WTC11 (cell line): ENCODE measurements at regions of chr20 and their contacts with region 1.

Region 1: GRCh38 chr20:21303061-21303871 is at the start of gene XRN2:
- DNase-seq: peak; percentile 95
- ATAC-seq: peak; percentile 90
- H3K4me3 Mint-ChIP-seq: peak within 1 kb of the TSS; percentile 96
- H3K27ac Mint-ChIP-seq: peak within 1 kb of the TSS; percentile 97
- H3K4me1 Mint-ChIP-seq: peaks cover 21% of the 10 kb centered on the region
- H3K27me3 Mint-ChIP-seq: no peaks in the 10 kb centered on the region
- CTCF ChIP-seq: no peak
- total RNA-seq, gene XRN2: 100 to 118 TPM (median 101 TPM) in 3 replicates

Region 2: GRCh38 chr20:21291026-21291425 is 12.2 kb before region 1 on chr20:
- CTCF ChIA-PET with region 1: interaction called, 3 read pairs
- POLR2A ChIA-PET with region 1: interaction called, 19 read pairs
- DNase-seq: no peak
- ATAC-seq: no peak
- H3K4me3 Mint-ChIP-seq: no peak overlapping the region
- H3K27ac Mint-ChIP-seq: no peak overlapping the region
- H3K4me1 Mint-ChIP-seq: peaks cover 22% of the 10 kb centered on the region
- H3K27me3 Mint-ChIP-seq: no peaks in the 10 kb centered on the region; the same call in 1 of the 2 replicates
- CTCF ChIP-seq: no peak

Region 3: DNA sequence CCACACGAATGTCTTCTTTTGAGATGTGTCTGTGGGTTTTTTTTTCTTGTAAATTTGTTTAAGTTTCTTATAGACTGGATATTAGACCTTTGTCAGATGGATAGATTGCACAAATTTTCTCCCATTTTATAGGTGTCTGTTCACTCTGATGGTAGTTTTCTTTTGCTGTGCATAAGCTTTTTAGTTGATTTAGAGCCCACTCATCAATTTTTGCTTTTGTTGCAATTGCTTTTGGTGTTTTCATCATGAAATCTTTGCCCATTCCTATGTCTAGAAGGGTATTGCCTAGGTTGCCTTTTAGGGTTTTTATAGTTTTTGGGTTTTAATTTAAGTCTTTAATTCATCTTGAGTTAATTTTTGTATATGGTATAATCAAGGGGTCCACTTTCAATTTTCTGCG is 152.9 kb after region 1 on chr20:
- CTCF ChIA-PET with region 1: no interaction called
- POLR2A ChIA-PET with region 1: no interaction called
- DNase-seq: no peak
- ATAC-seq: no peak
- H3K4me3 Mint-ChIP-seq: no peak overlapping the region
- H3K27ac Mint-ChIP-seq: no peak overlapping the region
- H3K4me1 Mint-ChIP-seq: no peaks in the 10 kb centered on the region
- H3K27me3 Mint-ChIP-seq: peaks cover 4% of the 10 kb centered on the region; the same call in 1 of the 2 replicates
- CTCF ChIP-seq: no peak